ENCODE measurements at regions of chr15 and their contacts with region 1.

Region 1: GRCh38 chr15:68691705-68692104 is 112.9 kb downstream of the CORO2B start:
- DNase-seq: no peak
- ATAC-seq: no peak
- H3K4me3 ChIP-seq: no peak overlapping the region
- H3K4me3 Mint-ChIP-seq: no peak overlapping the region
- H3K27ac ChIP-seq: no peak overlapping the region
- H3K27ac Mint-ChIP-seq: no peak overlapping the region
- H3K4me1 ChIP-seq: peaks cover 0 to 6% of the 10 kb centered on the region in 2 experiments
- H3K4me1 Mint-ChIP-seq: peaks cover 8 to 12% (median 9%) of the 10 kb centered on the region in 3 donors
- H3K27me3 ChIP-seq: peaks cover 0 to 6% of the 10 kb centered on the region in 2 experiments
- H3K27me3 Mint-ChIP-seq: peaks cover 0 to 5% of the 10 kb centered on the region in 2 donors

Region 2: DNA sequence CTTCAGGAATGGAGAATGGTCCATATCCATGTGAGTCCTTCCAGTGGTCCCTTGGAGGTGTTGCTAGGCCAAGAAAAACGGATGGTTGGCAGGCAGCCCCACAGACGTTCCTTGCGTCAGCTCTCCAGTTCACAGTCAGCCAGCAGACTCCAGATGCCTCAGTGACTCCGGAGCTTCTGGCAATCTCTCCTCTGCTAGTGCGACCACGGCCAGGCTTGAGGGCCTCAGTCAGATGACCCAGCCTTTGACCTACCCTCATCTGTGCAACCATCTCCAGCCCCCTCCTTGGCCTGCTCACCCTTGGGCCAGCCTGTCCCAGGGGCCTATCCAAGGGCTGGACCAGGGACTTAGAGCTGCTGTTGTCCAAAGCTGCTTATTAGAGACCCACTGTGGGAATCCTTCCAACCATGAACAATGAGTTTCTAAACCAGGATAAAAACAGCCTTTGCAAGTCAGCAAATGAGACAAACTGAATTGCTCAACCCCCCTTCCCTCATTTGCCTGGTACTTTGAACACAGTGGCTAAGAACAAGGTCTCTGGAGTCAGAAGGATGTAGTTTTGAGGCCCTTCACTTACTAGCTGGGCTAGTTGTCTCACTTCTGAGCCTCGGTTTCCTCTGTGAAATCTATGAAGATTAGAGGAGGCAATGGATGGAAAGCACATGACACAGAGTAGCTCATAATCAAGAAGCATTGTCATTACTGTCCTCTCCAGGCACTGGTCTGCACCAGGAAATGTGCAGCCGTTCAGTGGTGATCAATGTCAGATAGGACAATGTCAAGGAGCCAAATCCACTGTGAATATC is 84.2 kb after region 1 on chr15:
- CTCF ChIA-PET with region 1: no interaction called
- POLR2A ChIA-PET with region 1: interaction called in 1 of 2 experiments, 10 read pairs
- DNase-seq: no peak
- ATAC-seq: peak in 1 of 4 experiments; percentile 23
- H3K4me3 ChIP-seq: no peak overlapping the region
- H3K4me3 Mint-ChIP-seq: no peak overlapping the region
- H3K27ac ChIP-seq: no peak overlapping the region
- H3K27ac Mint-ChIP-seq: peak overlapping the region in 1 of 2 donors; percentile 12
- H3K4me1 ChIP-seq: no peaks in the 10 kb centered on the region
- H3K4me1 Mint-ChIP-seq: no peaks in the 10 kb centered on the region
- H3K27me3 ChIP-seq: no peaks in the 10 kb centered on the region
- H3K27me3 Mint-ChIP-seq: no peaks in the 10 kb centered on the region